A549 (cell line): ENCODE measurements at regions of chr6 and their contacts with region 1.

Region 1: DNA sequence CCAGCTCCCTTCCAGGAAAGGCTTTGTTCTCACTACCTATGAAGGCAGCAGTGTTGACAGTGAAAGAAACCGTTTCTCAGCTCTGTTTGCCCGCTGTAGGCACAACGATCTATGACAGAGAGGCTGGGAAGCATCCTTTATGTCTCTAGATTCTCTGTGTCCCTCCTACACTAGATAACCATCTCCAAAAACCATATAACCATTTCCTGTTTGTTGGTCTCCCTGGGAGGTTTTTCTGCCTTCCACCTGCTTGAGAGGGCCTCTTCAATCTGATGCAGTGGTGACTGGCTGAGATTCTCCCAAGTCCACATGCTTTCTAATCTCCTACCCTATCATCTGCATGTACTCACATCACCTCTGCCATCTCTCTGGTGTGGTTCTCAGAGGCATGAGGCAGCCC is 32.0 kb upstream of the TMEM217 start:
- DNase-seq: no peak
- ATAC-seq: no peak
- H3K4me3 ChIP-seq: no peak overlapping the region
- H3K27ac ChIP-seq: no peak overlapping the region
- H3K4me1 ChIP-seq: no peaks in the 10 kb centered on the region
- CTCF ChIP-seq: no peak
- EP300 ChIP-seq: no peak
- POLR2A ChIP-seq: no peak
- RAD21 ChIP-seq: no peak

Region 2: DNA sequence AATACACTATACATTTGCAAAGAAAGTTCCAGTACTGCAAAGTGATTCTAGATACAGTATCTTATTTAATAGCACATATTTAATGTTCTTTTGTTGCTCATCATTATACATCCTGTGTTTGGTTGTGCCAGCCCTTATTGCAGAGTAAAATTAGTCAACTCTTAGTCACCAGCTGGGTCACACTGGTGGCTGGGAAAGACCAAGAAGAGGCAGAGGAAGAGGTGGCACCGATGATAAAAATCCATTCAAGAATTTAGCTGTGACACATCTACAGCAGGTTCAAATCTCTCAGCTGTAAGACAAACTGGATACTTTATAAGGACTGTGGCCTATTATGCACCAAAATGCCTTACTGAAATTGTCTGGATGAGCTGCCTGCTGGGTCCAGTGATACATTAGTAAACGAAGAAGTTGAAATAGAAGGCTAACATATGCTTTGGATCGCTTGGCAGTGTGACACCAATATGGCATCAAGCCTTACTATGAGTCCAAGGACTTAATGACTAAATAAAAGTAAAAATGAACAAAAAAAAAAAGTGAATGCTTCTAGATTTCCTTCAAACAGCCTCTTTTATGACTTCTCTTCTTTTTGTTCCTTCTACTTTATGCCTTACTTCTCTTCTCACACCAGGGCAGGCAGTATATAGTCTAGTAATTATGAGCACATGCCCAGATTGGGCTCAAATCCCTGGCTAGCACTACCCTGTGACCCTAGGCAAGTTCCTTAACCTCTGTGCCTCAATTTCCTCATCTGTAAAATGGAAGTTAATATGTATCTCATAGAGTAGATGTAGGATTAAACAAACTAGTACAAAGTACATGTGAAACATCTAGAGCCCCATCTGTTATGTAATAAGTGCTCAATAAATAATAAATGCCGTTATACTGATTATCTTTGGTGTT is 34.5 kb after region 1 on chr6:
- CTCF ChIA-PET with region 1: interaction called, 10 read pairs
- POLR2A ChIA-PET with region 1: no interaction called
- DNase-seq: no peak
- ATAC-seq: peak in 1 of 2 experiments; percentile 40; a peak in 1 of 6 replicates
- H3K4me3 ChIP-seq: no peak overlapping the region
- H3K27ac ChIP-seq: no peak overlapping the region
- H3K4me1 ChIP-seq: peaks cover 11% of the 10 kb centered on the region
- CTCF ChIP-seq: no peak
- EP300 ChIP-seq: no peak
- POLR2A ChIP-seq: no peak
- RAD21 ChIP-seq: no peak

Region 3: GRCh38 chr6:37381579-37381978 is 91.6 kb after region 1 on chr6:
- CTCF ChIA-PET with region 1: no interaction called
- POLR2A ChIA-PET with region 1: no interaction called
- DNase-seq: peak; percentile 15 to 71
- ATAC-seq: peak; percentile 59 to 79
- H3K4me3 ChIP-seq: no peak overlapping the region
- H3K27ac ChIP-seq: no peak overlapping the region
- H3K4me1 ChIP-seq: no peaks in the 10 kb centered on the region
- CTCF ChIP-seq: peak; percentile 50
- EP300 ChIP-seq: no peak
- POLR2A ChIP-seq: no peak
- RAD21 ChIP-seq: peak; percentile 47 to 50; a peak in 4 of 5 replicates